ENCODE measurements at regions of chr10 and their contacts with region 1.

Region 1: GRCh38 chr10:103476046-103476995 is 2.7 kb downstream of the CALHM3 start:
- DNase-seq: peak; percentile 58
- ATAC-seq: peak; percentile 40
- H3K4me3 Mint-ChIP-seq: no peak overlapping the region
- H3K27ac Mint-ChIP-seq: peak overlapping the region; percentile 14
- H3K4me1 Mint-ChIP-seq: peaks cover 38% of the 10 kb centered on the region
- H3K27me3 Mint-ChIP-seq: no peaks in the 10 kb centered on the region

Region 2: GRCh38 chr10:103451831-103452505 is 24.4 kb before region 1 on chr10 and contains the start of gene CALHM2:
- CTCF ChIA-PET with region 1: interaction called, 54 read pairs
- DNase-seq: peak; percentile 74
- ATAC-seq: peak; percentile 83
- H3K4me3 Mint-ChIP-seq: peak within 1 kb of the TSS; percentile 82
- H3K27ac Mint-ChIP-seq: peak within 1 kb of the TSS; percentile 89
- H3K4me1 Mint-ChIP-seq: peaks cover 56% of the 10 kb centered on the region
- H3K27me3 Mint-ChIP-seq: no peaks in the 10 kb centered on the region
- total RNA-seq, gene CALHM2: 65.6 to 93.4 TPM

Region 3: GRCh38 chr10:103465411-103466179 is 10.7 kb before region 1 on chr10:
- CTCF ChIA-PET with region 1: interaction called, 14 read pairs
- DNase-seq: no peak
- ATAC-seq: no peak
- H3K4me3 Mint-ChIP-seq: no peak overlapping the region
- H3K27ac Mint-ChIP-seq: no peak overlapping the region
- H3K4me1 Mint-ChIP-seq: peaks cover 41% of the 10 kb centered on the region
- H3K27me3 Mint-ChIP-seq: no peaks in the 10 kb centered on the region

Measured in activated CD8-positive, alpha-beta memory T cell treated with anti-CD3 and anti-CD28 coated beads, Interleukin-2, amount 10 ng/mL, durations not matched to agents 7 days and 5 days (primary cell).